ENCODE measurements at regions of chr2 and their contacts with region 1.

Region 1: GRCh38 chr2:219576493-219577388 is 4.6 kb downstream of the INHA start:
- DNase-seq: peak; percentile 83
- H3K4me3 Mint-ChIP-seq: peak overlapping the region; percentile 51
- H3K27ac Mint-ChIP-seq: no peak overlapping the region
- H3K4me1 Mint-ChIP-seq: peaks cover 17% of the 10 kb centered on the region
- H3K27me3 Mint-ChIP-seq: peaks cover 8% of the 10 kb centered on the region
- CTCF ChIP-seq: no peak

Region 2: GRCh38 chr2:218367415-218368153 is 1209.2 kb before region 1 on chr2:
- CTCF ChIA-PET with region 1: no interaction called
- intact Hi-C with region 1: no loop called
- DNase-seq: peak; percentile 91
- H3K4me3 Mint-ChIP-seq: peak overlapping the region; percentile 87
- H3K27ac Mint-ChIP-seq: peak overlapping the region; percentile 90
- H3K4me1 Mint-ChIP-seq: no peaks in the 10 kb centered on the region
- H3K27me3 Mint-ChIP-seq: no peaks in the 10 kb centered on the region
- CTCF ChIP-seq: no peak

Region 3: DNA sequence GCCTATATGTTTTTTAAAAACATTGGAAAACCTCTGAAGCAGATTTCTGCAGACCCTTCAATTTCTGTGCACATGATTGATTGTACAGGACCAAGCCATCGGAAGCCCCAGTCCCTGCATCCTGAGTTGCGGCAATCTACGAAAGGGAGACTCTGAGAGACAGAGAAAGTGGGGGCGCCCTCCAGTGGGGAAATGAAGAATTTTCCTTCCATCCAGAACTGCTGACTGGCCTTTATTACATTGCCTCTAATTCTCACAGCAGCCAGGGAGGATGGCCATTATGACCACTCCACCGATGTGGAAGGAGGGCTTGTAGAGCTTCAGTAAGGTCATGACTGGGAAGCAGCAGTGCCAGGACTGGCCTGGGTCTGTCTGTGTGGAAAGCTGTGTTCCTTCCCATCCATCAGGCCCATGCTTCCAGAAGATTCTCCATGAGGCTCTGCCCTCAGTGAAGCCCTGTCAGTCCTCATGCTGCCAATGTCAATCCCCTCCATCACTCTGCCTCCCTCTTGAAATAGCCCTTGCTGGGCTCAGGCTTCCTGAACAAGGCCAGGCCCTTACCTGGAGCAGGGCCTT is 224.2 kb before region 1 on chr2:
- CTCF ChIA-PET with region 1: no interaction called
- intact Hi-C with region 1: no loop called
- DNase-seq: peak; percentile 81
- H3K4me3 Mint-ChIP-seq: no peak overlapping the region
- H3K27ac Mint-ChIP-seq: no peak overlapping the region
- H3K4me1 Mint-ChIP-seq: no peaks in the 10 kb centered on the region
- H3K27me3 Mint-ChIP-seq: peaks cover 82% of the 10 kb centered on the region
- CTCF ChIP-seq: peak; percentile 76

Region 4: GRCh38 chr2:219597552-219598307 is 21.0 kb after region 1 on chr2 and contains the start of gene STK11IP:
- CTCF ChIA-PET with region 1: interaction called, 5 read pairs
- intact Hi-C with region 1: loop called (anchors 1 kb)
- DNase-seq: peak; percentile 96
- H3K4me3 Mint-ChIP-seq: peak within 1 kb of the TSS; percentile 95
- H3K27ac Mint-ChIP-seq: peak within 1 kb of the TSS; percentile 93
- H3K4me1 Mint-ChIP-seq: peaks cover 10% of the 10 kb centered on the region
- H3K27me3 Mint-ChIP-seq: no peaks in the 10 kb centered on the region
- CTCF ChIP-seq: no peak
- total RNA-seq, gene STK11IP: 29.3 and 32.5 TPM in 2 replicates

Measured in Calu3 (cell line).